A673 (cell line): ENCODE measurements at regions of chr1 and their contacts with region 1.

Region 1: GRCh38 chr1:145996433-145997015 is at the start of gene TXNIP:
- DNase-seq: peak; percentile 98
- H3K4me3 ChIP-seq: peak within 1 kb of the TSS; percentile 67
- H3K27ac ChIP-seq: peak within 1 kb of the TSS; percentile 72
- H3K4me1 ChIP-seq: peaks cover 35% of the 10 kb centered on the region
- H3K27me3 ChIP-seq: no peaks in the 10 kb centered on the region
- CTCF ChIP-seq: no peak
- total RNA-seq, gene TXNIP: 27.3 and 36.4 TPM in 2 replicates

Region 2: GRCh38 chr1:145985502-145986439 is 10.8 kb before region 1 on chr1:
- CTCF ChIA-PET with region 1: no interaction called
- POLR2A ChIA-PET with region 1: interaction called, 3 read pairs
- intact Hi-C with region 1: loop called (anchors 1 kb)
- DNase-seq: peak; percentile 42
- H3K4me3 ChIP-seq: no peak overlapping the region
- H3K27ac ChIP-seq: peak overlapping the region; percentile 81
- H3K4me1 ChIP-seq: peaks cover 21% of the 10 kb centered on the region
- H3K27me3 ChIP-seq: no peaks in the 10 kb centered on the region
- CTCF ChIP-seq: no peak